ENCODE measurements at regions of chr22 and their contacts with region 1.

Region 1: GRCh38 chr22:40116496-40117200 is 61.1 kb upstream of the TNRC6B start:
- DNase-seq: peak in 1 of 2 donors; percentile 85
- ATAC-seq: peak; percentile 59 to 66 (median 60)
- H3K4me3 ChIP-seq: no peak overlapping the region
- H3K4me3 Mint-ChIP-seq: peak overlapping the region; percentile 38
- H3K27ac ChIP-seq: no peak overlapping the region
- H3K27ac Mint-ChIP-seq: peak overlapping the region; percentile 53 to 80
- H3K4me1 ChIP-seq: peaks cover 24% of the 10 kb centered on the region
- H3K4me1 Mint-ChIP-seq: peaks cover 56 to 69% of the 10 kb centered on the region in 2 donors
- H3K27me3 ChIP-seq: no peaks in the 10 kb centered on the region
- H3K27me3 Mint-ChIP-seq: no peaks in the 10 kb centered on the region
- CTCF ChIP-seq: no peak

Region 2: GRCh38 chr22:39818094-39818493 is 298.6 kb before region 1 on chr22:
- intact Hi-C with region 1: no loop called
- DNase-seq: no peak
- ATAC-seq: no peak
- H3K4me3 ChIP-seq: no peak overlapping the region
- H3K4me3 Mint-ChIP-seq: no peak overlapping the region
- H3K27ac ChIP-seq: no peak overlapping the region
- H3K27ac Mint-ChIP-seq: no peak overlapping the region
- H3K4me1 ChIP-seq: no peaks in the 10 kb centered on the region
- H3K4me1 Mint-ChIP-seq: no peaks in the 10 kb centered on the region
- H3K27me3 ChIP-seq: no peaks in the 10 kb centered on the region
- H3K27me3 Mint-ChIP-seq: peaks cover 6 to 38% of the 10 kb centered on the region in 2 donors
- CTCF ChIP-seq: no peak

Region 3: GRCh38 chr22:39900306-39901227 is 216.1 kb before region 1 on chr22 and contains the start of gene GRAP2:
- intact Hi-C with region 1: loop called (anchors 10 kb)
- DNase-seq: peak; percentile 50 to 90
- ATAC-seq: peak; percentile 94 to 98 (median 96)
- H3K4me3 ChIP-seq: peak within 1 kb of the TSS; percentile 73
- H3K4me3 Mint-ChIP-seq: peak within 1 kb of the TSS; percentile 97
- H3K27ac ChIP-seq: peak within 1 kb of the TSS; percentile 82
- H3K27ac Mint-ChIP-seq: peak within 1 kb of the TSS; percentile 92 to 94
- H3K4me1 ChIP-seq: peaks cover 36% of the 10 kb centered on the region
- H3K4me1 Mint-ChIP-seq: peaks cover 51 to 58% of the 10 kb centered on the region in 2 donors
- H3K27me3 ChIP-seq: no peaks in the 10 kb centered on the region
- H3K27me3 Mint-ChIP-seq: no peaks in the 10 kb centered on the region
- CTCF ChIP-seq: no peak
- total RNA-seq, gene GRAP2: 65.1 to 97.3 (median 92.2) TPM

Region 4: GRCh38 chr22:40137132-40137531 is 20.5 kb after region 1 on chr22:
- intact Hi-C with region 1: no loop called
- DNase-seq: no peak
- ATAC-seq: no peak
- H3K4me3 ChIP-seq: no peak overlapping the region
- H3K4me3 Mint-ChIP-seq: no peak overlapping the region
- H3K27ac ChIP-seq: no peak overlapping the region
- H3K27ac Mint-ChIP-seq: peak overlapping the region in 1 of 2 donors; percentile 48
- H3K4me1 ChIP-seq: no peaks in the 10 kb centered on the region
- H3K4me1 Mint-ChIP-seq: peaks cover 10 to 13% of the 10 kb centered on the region in 2 donors
- H3K27me3 ChIP-seq: no peaks in the 10 kb centered on the region
- H3K27me3 Mint-ChIP-seq: no peaks in the 10 kb centered on the region
- CTCF ChIP-seq: no peak